Activated naive CD8-positive, alpha-beta T cell treated with anti-CD3 and anti-CD28 coated beads, Interleukin-2, amount 10 ng/mL, durations not matched to agents 7 days and 5 days (primary cell): ENCODE measurements at regions of chr19 and their contacts with region 1.

Region 1: GRCh38 chr19:5827891-5828660 is 11.4 kb downstream of the FUT6 start:
- DNase-seq: peak; percentile 99
- ATAC-seq: peak; percentile 85
- H3K4me3 Mint-ChIP-seq: peak overlapping the region; percentile 99
- H3K27ac Mint-ChIP-seq: peak overlapping the region; percentile 100
- H3K4me1 Mint-ChIP-seq: peaks cover 5% of the 10 kb centered on the region
- H3K27me3 Mint-ChIP-seq: peaks cover 2% of the 10 kb centered on the region

Region 2: GRCh38 chr19:5727453-5728050 is 100.5 kb before region 1 on chr19:
- POLR2A ChIA-PET with region 1: no interaction called
- DNase-seq: no peak
- ATAC-seq: no peak
- H3K4me3 Mint-ChIP-seq: no peak overlapping the region
- H3K27ac Mint-ChIP-seq: no peak overlapping the region
- H3K4me1 Mint-ChIP-seq: no peaks in the 10 kb centered on the region
- H3K27me3 Mint-ChIP-seq: peaks cover 8% of the 10 kb centered on the region

Region 3: DNA sequence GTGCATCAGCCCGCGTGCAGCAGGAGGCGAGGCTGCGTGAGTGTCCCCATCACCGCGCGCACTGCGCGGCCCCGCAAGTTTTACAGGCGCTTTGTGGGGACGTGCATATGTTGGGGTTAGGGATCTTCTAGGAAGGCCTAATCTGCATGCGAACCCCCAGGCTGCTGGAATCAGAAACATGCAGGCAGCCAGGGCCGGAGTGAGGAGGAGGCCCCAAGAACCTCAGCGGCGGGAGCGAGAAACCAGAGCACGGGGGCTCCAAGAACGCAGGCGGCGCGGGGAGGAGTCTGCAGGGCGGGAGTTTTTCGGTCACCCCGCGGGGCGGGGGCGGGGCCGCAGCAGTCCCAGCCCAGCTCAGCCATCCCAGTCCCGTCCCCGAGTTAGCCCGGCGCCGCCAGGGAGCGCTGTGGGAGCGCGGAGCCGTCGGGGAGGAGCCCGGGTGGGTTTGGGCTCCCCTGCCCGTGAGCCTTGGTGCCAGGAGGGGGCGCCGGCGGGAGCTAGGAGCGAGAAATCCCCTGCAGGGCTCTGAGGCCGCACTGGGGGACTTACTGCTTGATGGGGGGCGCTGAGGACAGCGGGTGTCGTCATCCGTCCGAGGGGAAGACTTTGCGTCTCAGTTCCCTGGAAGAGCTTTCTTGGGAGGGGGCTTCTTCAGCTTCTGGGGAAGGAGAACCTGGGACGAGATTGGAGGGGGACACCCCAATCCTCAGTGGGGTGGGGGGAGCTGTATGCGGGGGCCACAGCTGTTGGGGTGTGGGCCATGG is 24.1 kb before region 1 on chr19:
- POLR2A ChIA-PET with region 1: interaction called, 20 read pairs
- DNase-seq: peak; percentile 99
- ATAC-seq: peak; percentile 96
- H3K4me3 Mint-ChIP-seq: peak overlapping the region; percentile 82
- H3K27ac Mint-ChIP-seq: no peak overlapping the region
- H3K4me1 Mint-ChIP-seq: peaks cover 20% of the 10 kb centered on the region
- H3K27me3 Mint-ChIP-seq: peaks cover 39% of the 10 kb centered on the region

Region 4: DNA sequence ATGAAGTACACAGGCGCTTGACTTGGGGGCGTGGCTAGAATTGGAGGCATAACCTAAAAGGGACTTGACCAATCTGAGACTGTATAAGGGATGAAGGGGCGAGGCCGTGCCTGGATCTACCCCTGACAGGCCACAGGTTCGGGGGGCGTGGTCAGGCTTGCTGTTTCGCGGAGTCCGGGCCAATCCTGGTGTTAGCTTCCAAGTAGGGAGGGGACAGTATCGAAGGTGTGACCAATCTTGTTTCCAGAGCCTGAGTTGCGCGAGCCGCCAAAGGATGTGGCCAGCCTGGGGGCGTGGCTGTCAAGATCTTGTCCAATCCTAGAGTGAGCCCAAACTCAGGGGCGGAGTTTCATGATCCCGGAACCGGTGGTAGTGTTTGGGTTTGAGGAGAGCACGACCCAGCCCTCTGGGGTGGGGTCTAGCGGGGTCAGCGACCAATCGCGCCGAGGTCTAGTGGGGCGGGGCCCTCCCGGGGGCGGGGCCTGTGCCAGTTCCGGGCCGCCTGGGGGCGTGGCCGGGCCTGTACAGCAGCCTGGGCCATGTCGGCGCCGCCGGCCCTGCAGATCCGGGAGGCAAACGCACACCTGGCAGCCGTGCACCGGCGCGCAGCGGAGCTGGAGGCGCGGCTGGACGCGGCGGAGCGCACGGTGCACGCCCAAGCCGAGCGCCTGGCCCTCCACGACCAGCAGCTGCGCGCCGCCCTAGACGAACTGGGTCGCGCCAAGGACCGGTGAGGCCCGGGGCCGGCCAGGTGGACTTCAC is 76.5 kb after region 1 on chr19 and contains the start of gene VMAC:
- POLR2A ChIA-PET with region 1: interaction called, 72 read pairs
- DNase-seq: peak; percentile 100
- ATAC-seq: peak; percentile 86
- H3K4me3 Mint-ChIP-seq: peak within 1 kb of the TSS; percentile 96
- H3K27ac Mint-ChIP-seq: peak within 1 kb of the TSS; percentile 99
- H3K4me1 Mint-ChIP-seq: peaks cover 21% of the 10 kb centered on the region
- H3K27me3 Mint-ChIP-seq: no peaks in the 10 kb centered on the region
- total RNA-seq, gene VMAC: 15.6 to 17.5 TPM

Region 5: DNA sequence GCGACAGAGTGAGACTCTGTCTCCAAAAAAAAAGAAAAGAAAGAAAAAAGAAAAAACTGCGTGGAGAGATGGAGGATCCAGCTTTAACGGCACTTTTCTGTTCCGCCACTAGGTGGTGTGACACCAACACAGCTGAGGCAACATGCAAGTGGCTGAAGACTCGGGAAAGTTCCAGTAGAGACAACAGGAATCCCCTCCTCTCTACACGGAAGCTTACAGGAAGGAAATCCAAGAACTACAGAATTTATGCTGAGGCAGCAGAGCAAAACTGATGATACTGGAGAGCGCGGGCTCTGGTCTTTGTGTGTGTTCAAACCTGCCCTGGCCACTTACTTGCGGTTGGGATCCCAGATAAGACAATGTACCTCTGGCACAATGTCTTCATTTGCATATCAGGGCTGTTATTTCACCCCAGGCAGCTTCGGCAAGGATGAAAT is 139.9 kb after region 1 on chr19:
- POLR2A ChIA-PET with region 1: interaction called, 10 read pairs
- DNase-seq: no peak
- ATAC-seq: peak; percentile 53
- H3K4me3 Mint-ChIP-seq: peak overlapping the region; percentile 41
- H3K27ac Mint-ChIP-seq: peak overlapping the region; percentile 67
- H3K4me1 Mint-ChIP-seq: peaks cover 56% of the 10 kb centered on the region
- H3K27me3 Mint-ChIP-seq: no peaks in the 10 kb centered on the region

Region 6: DNA sequence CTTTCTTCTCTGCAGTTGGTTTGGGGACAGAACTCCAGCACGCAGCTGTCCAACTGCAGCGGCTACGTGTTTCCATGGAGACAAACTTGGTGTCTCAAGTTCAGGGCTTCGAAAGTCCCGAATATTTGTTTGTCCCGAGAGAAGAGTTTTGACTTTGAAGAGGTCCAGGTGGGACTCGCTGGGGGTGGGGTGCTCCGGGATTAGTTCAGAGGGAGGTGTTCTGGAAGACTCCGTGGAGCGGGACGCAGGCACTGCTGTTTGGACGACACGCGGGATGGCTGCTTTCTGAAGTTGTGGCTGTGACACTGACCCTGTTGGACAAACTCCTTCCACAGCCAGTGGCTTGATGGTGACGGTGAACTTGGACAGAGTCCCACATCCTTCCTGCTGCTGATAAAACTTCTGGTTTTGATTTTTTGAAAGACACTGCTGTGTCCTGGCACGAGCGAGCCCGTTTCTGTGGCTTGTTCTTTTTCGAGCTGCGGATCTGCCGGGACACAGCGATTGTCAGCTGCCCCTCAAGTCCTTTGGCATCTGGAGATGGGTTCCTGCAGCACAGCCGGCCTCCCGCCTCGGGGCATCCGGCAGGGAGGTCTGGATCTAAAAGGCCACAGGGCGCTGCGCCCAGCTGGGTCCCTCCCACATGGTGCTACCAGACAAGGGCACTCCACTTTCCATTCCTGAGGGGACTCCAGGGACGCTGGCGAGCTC is 165.7 kb after region 1 on chr19:
- POLR2A ChIA-PET with region 1: no interaction called
- DNase-seq: no peak
- ATAC-seq: no peak
- H3K4me3 Mint-ChIP-seq: no peak overlapping the region
- H3K27ac Mint-ChIP-seq: no peak overlapping the region
- H3K4me1 Mint-ChIP-seq: peaks cover 4% of the 10 kb centered on the region
- H3K27me3 Mint-ChIP-seq: no peaks in the 10 kb centered on the region